ENCODE measurements at regions of chr6 and their contacts with region 1.

Region 1: DNA sequence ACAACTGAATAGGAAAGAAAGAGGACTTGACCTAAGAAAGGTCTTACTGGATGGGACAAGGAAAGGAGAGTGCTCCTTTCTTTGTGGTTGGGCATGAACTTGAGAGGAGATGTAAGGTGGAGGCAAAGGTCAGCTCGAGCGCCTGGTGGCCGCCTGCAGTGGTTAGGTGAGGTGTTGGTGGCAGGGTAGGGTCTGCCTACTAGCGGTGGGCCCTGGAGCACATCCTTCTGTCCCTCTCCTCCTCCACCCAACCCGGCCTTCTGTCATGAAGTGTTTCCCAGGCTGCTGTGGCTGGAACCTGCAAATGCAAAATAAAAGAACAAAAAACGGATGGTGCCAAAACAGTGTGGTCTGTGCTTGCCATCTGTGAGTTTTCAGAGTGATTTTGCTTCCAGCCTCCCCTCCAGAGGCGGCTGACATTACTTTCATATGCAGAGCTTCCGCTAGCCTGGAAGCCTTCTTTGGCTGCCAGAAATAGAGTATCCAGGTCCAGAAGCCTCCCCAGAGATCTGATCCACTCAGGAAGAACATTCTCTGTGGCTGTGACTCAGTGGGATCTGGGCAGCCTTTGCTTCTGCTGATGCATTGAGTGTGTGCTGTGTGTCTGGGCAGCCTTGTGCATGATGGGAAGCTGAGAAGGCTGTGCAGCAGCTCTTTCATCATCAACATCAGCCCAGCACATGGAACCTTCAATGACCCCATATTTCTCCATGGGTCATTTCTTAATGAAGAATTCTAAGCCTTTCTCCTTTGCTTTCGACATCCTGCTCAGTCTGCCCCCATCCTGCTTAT is 79.8 kb upstream of the FAM184A start:
- DNase-seq: no peak
- ATAC-seq: no peak
- H3K4me3 ChIP-seq: no peak overlapping the region
- H3K27ac ChIP-seq: no peak overlapping the region
- H3K4me1 ChIP-seq: no peaks in the 10 kb centered on the region; the same call in 1 of the 2 replicates
- H3K27me3 ChIP-seq: peaks cover 0 to 1% of the 10 kb centered on the region in 2 experiments; a peak in 2 of 4 replicates
- CTCF ChIP-seq: no peak
- EP300 ChIP-seq: no peak
- POLR2A ChIP-seq: no peak
- RAD21 ChIP-seq: no peak

Region 2: GRCh38 chr6:119122336-119122735 is 35.9 kb before region 1 on chr6:
- CTCF ChIA-PET with region 1: no interaction called
- POLR2A ChIA-PET with region 1: no interaction called
- RAD21 ChIA-PET with region 1: no interaction called
- SMC1A ChIA-PET with region 1: no interaction called
- in situ Hi-C with region 1: no loop called
- intact Hi-C with region 1: no loop called
- DNase-seq: no peak
- ATAC-seq: no peak
- H3K4me3 ChIP-seq: no peak overlapping the region
- H3K27ac ChIP-seq: no peak overlapping the region
- H3K4me1 ChIP-seq: no peaks in the 10 kb centered on the region
- H3K27me3 ChIP-seq: no peaks in the 10 kb centered on the region
- CTCF ChIP-seq: no peak
- EP300 ChIP-seq: no peak
- POLR2A ChIP-seq: no peak
- RAD21 ChIP-seq: no peak

Region 3: DNA sequence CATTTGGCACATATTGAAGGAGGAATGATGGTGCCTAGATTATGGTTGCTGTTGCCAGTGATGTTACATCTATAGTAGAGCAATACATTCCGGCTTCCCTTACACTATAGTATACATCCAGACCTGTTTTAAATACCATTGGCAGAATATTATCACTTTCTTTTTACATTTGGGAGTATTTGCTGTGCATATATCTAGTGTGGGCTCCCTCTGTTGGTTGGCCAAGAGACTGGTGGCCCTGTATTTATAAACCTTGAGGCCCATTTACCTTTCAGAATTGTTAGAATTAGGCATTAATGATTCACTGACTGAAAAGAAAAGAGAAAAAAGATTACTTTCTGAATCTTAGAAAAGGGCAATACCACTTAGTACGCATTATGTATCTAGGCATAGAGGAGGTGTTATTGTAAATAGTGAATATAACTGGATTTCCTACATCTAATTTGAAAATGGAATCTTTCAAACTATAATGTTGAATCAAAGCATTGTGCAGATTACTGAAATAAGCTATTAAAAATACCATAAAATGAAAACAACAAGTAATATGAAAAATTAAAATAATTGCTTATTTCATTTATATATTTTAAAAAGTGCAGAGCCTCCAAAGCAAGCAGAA is 820.1 kb after region 1 on chr6:
- CTCF ChIA-PET with region 1: interaction called, 4 read pairs
- POLR2A ChIA-PET with region 1: no interaction called
- RAD21 ChIA-PET with region 1: no interaction called
- SMC1A ChIA-PET with region 1: interaction called, 3 read pairs
- in situ Hi-C with region 1: loop called (anchors 10 kb)
- intact Hi-C with region 1: no loop called
- DNase-seq: no peak
- ATAC-seq: peak; percentile 80
- H3K4me3 ChIP-seq: no peak overlapping the region
- H3K27ac ChIP-seq: no peak overlapping the region
- H3K4me1 ChIP-seq: no peaks in the 10 kb centered on the region
- H3K27me3 ChIP-seq: no peaks in the 10 kb centered on the region
- CTCF ChIP-seq: peak; percentile 43 to 48 (median 48); a peak in 5 of 6 replicates
- EP300 ChIP-seq: no peak
- POLR2A ChIP-seq: no peak
- RAD21 ChIP-seq: peak; percentile 57

Measured in GM12878 (cell line).